Cardiac septum (tissue), 1 donor: ENCODE measurements at regions of chr21 and their contacts with region 1.

Region 1: GRCh38 chr21:17512253-17513213 is at the start of gene CXADR:
- DNase-seq: peak; percentile 80
- total RNA-seq, gene CXADR: 23.8 TPM

Region 2: DNA sequence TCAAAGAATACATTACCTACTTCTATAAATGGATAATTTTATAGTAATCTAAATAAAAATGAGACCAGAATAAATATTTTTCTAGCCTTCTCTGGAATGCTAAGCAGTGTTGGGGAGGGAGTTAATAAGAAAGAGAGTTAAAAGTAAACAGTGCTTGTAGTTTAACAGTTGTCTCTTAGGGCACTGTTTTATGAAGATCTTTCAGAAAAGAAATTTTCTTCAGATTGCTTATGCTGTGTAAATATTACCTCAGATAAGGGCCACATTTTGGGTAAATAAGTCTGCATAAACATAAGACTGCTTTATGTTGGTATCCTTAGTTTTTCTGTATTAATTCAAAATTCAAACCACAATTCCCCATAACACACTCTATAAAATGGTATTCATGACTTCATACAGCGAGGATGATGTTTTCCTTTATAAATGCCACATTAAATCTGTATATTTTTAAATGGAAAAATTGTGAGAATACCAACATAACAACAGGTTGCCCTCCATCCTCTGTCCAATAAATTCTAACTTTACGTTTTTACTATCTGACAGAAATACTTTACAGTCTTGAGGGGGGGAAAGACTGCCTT is 248.4 kb before region 1 on chr21:
- intact Hi-C with region 1: no loop called
- DNase-seq: no peak

Region 3: DNA sequence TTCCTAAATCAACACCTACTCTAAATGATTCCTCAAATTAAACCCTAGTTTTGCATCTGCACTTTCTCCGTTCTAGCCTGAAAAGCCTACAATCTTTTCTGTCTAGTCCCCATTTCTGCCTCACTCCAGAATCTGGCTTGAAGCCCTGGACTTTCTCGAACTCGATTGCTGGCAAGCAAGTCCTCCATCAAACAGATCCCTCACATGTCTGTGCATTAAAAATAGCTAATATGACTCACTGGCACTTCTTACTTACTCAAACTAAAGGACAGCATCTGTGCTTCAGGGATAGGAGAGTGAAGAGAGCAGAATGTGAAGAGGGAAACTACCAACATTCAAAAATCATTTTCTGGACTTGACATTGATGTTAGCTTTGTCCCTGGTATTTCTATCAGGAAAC is 51.5 kb before region 1 on chr21:
- intact Hi-C with region 1: loop called (anchors 10 kb)
- DNase-seq: no peak

Region 4: GRCh38 chr21:17479606-17480005 is 32.9 kb before region 1 on chr21:
- intact Hi-C with region 1: no loop called
- DNase-seq: no peak

Region 5: DNA sequence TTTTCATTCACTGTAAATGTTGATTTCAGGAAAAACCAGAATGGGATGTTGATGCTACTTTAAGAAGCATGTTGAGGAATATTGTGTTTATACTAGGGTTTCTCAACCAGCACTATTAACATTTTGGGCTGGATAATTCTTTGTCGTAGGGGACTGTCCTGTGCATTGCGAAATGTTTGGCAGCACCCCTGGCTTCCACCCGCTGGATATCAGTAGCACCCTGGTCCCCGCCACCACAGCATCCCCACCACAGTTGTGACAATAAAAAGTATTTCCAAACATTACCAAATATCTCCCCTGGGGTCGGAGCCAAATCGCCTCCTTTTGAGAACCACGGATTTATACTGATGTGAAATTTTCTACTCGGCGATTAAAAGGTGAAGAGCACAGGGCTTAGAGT is 58.3 kb after region 1 on chr21:
- intact Hi-C with region 1: no loop called
- DNase-seq: no peak